ENCODE measurements at regions of chr2 and their contacts with region 1.

Region 1: DNA sequence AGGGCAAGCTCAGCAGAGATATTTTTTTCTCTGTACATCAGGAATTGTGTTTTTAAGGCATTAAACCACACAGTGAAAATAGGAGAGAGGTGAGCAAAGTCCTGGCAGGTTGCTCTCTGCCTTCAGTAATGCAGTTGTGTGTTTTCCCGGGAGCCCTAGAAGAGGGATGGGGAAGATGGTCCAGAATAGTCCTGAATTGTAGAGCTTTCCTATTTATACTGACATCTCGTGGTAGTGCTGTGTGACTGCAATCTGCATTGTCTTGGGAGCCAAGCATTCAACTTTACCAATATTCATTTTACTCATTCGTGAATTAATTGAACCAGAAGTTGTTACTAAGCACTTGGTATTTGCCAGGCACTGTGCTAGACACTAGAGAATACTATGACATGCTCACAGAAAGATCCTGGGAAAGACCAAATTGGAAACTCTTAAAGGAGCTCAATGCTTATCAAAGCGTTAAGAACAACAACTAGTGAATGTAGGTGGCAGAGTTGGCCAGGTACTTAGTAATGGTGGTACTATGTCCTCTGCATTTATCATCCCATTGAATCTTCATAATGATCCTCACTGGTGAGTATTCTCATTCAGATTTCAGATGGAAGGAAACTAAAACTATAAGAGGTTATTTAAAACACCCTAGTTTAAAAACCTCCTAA is 214.6 kb downstream of the TRIB2 start:
- DNase-seq: peak in 3 of 9 experiments; percentile 6 to 51 (median 28)
- ATAC-seq: peak; percentile 40
- H3K4me3 ChIP-seq: no peak overlapping the region
- H3K4me3 Mint-ChIP-seq: no peak overlapping the region
- H3K27ac ChIP-seq: no peak overlapping the region
- H3K27ac Mint-ChIP-seq: no peak overlapping the region
- H3K4me1 ChIP-seq: no peaks in the 10 kb centered on the region
- H3K4me1 Mint-ChIP-seq: no peaks in the 10 kb centered on the region
- H3K27me3 ChIP-seq: no peaks in the 10 kb centered on the region
- H3K27me3 Mint-ChIP-seq: peaks cover 2% of the 10 kb centered on the region
- CTCF ChIP-seq: peak; percentile 70

Region 2: GRCh38 chr2:11829947-11830707 is 1101.2 kb before region 1 on chr2:
- CTCF ChIA-PET with region 1: interaction called, 27 read pairs
- POLR2A ChIA-PET with region 1: no interaction called
- intact Hi-C with region 1: loop called (anchors 1 to 2 kb)
- DNase-seq: peak in 8 of 9 experiments; percentile 21 to 77 (median 51)
- ATAC-seq: peak; percentile 78
- H3K4me3 ChIP-seq: peak overlapping the region; percentile 27 to 40
- H3K4me3 Mint-ChIP-seq: peak overlapping the region; percentile 78
- H3K27ac ChIP-seq: no peak overlapping the region
- H3K27ac Mint-ChIP-seq: peak overlapping the region; percentile 42
- H3K4me1 ChIP-seq: peaks cover 28% of the 10 kb centered on the region
- H3K4me1 Mint-ChIP-seq: peaks cover 45% of the 10 kb centered on the region
- H3K27me3 ChIP-seq: no peaks in the 10 kb centered on the region
- H3K27me3 Mint-ChIP-seq: no peaks in the 10 kb centered on the region
- CTCF ChIP-seq: no peak

Region 3: DNA sequence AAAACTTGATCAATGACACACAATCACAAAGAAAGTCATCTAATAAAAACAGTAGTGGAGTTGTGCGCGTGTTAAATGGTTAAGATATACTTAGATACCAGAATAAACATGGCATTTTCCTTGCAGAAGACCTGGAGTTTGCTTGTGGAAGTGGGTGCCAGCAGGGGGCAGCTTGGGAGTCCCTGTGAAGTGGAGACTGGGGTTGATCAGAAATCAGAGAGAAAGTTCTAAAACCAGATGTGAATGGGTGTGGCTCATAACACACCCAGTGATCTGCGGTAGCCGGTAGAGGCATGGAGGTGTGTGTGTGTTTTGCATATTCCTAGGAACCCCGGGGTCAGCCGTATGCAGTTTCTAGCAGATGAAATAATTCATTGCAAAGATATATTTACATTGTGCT is 514.7 kb before region 1 on chr2:
- CTCF ChIA-PET with region 1: interaction called, 16 read pairs
- POLR2A ChIA-PET with region 1: no interaction called
- intact Hi-C with region 1: loop called (anchors 2 kb)
- DNase-seq: peak; percentile 34 to 78 (median 58)
- ATAC-seq: peak; percentile 62
- H3K4me3 ChIP-seq: no peak overlapping the region
- H3K4me3 Mint-ChIP-seq: no peak overlapping the region
- H3K27ac ChIP-seq: no peak overlapping the region
- H3K27ac Mint-ChIP-seq: peak overlapping the region; percentile 5
- H3K4me1 ChIP-seq: peaks cover 20% of the 10 kb centered on the region
- H3K4me1 Mint-ChIP-seq: peaks cover 34% of the 10 kb centered on the region
- H3K27me3 ChIP-seq: no peaks in the 10 kb centered on the region
- H3K27me3 Mint-ChIP-seq: no peaks in the 10 kb centered on the region
- CTCF ChIP-seq: peak; percentile 43

Region 4: DNA sequence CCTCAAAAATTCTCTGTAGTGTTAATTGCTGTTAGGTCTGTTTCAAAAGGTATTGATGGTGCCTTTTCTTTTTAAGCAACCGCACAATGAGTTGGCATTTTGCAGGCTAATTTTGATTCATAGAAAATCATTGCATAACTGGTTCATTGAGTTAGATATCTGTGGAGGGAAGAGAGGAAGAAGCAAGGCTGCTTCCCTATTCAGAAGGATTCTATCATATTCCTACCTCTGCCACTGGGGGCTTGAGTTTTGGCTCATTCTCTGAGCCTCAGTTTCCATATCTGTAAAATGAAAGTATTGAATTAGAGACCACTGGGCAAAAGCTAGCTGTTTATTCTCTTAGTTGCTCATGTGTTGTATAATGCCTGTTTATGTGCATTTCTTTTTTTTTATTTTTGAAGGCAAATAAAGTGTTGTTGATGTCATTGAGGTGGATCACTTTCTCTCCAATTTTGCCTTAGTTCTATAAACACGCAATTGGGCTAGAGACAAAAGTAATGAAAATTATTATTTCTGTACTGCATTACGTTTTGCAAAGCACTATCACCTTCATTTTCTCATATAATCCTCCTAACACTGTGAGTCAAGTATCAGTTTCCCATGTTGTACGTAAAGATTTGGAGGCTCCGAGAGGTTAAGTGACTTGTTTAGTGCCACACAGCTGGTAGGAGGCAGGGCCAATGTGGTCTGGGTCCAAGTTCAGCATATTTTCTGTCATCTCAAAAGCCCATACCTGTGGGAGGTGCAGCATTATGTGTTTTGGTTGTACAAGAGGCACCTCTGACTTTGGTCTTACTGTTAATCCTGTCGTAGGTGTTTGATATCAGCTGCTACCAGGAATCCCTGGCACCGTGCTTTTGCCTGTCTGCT is 208.6 kb before region 1 on chr2:
- CTCF ChIA-PET with region 1: interaction called, 40 read pairs
- POLR2A ChIA-PET with region 1: interaction called, 15 read pairs
- intact Hi-C with region 1: loop called in 1 of 2 experiments (anchors 5 kb)
- DNase-seq: no peak
- ATAC-seq: no peak
- H3K4me3 ChIP-seq: no peak overlapping the region
- H3K4me3 Mint-ChIP-seq: peak overlapping the region; percentile 19
- H3K27ac ChIP-seq: no peak overlapping the region
- H3K27ac Mint-ChIP-seq: no peak overlapping the region
- H3K4me1 ChIP-seq: peaks cover 50% of the 10 kb centered on the region
- H3K4me1 Mint-ChIP-seq: peaks cover 85% of the 10 kb centered on the region
- H3K27me3 ChIP-seq: no peaks in the 10 kb centered on the region
- H3K27me3 Mint-ChIP-seq: no peaks in the 10 kb centered on the region
- CTCF ChIP-seq: no peak

Region 5: DNA sequence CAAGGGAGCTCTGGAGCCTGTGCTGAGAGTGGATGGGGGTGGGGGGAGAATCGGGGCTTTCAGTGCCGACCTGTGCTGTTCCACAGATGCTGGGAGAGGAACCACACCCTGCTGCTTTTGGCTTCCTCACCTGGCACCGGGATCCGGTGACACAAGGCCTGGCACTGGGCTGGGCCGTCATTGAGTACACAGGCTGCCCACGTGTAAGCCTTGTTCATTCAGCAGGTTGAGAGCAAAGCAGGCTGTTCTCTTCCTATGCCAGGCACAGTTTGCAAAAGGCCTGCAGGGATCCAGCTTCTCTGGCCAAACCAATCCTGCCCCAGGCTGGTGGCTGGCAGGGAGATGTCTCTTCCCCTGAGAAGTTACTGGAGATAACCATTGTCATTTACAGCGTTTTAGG is 197.5 kb before region 1 on chr2:
- CTCF ChIA-PET with region 1: interaction called, 28 read pairs
- POLR2A ChIA-PET with region 1: interaction called, 5 read pairs
- intact Hi-C with region 1: no loop called
- DNase-seq: no peak
- ATAC-seq: no peak
- H3K4me3 ChIP-seq: no peak overlapping the region
- H3K4me3 Mint-ChIP-seq: no peak overlapping the region
- H3K27ac ChIP-seq: no peak overlapping the region
- H3K27ac Mint-ChIP-seq: no peak overlapping the region
- H3K4me1 ChIP-seq: peaks cover 47% of the 10 kb centered on the region
- H3K4me1 Mint-ChIP-seq: peaks cover 63% of the 10 kb centered on the region
- H3K27me3 ChIP-seq: no peaks in the 10 kb centered on the region
- H3K27me3 Mint-ChIP-seq: no peaks in the 10 kb centered on the region
- CTCF ChIP-seq: no peak

Region 6: DNA sequence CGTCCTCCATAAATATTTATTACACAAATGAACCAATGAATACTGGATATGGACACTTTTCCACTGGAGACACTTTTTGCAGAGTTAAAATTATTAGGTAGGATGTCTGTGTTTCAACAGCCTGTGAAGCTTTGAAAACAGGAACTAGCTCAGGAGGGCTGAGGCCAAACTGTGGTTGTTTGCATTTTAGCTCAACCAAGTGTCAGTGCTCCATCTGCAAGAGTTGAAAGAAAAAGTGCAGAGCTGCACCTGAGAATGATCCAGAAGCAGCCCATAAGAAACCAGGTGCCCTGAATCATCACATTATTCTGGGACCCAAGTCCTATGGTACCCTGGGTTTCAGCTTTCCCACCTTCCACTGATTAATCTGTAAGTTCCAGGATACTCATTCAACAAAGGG is 34.1 kb before region 1 on chr2:
- CTCF ChIA-PET with region 1: interaction called, 22 read pairs
- POLR2A ChIA-PET with region 1: interaction called, 9 read pairs
- intact Hi-C with region 1: no loop called
- DNase-seq: peak in 2 of 9 experiments; percentile 13 to 56
- ATAC-seq: no peak
- H3K4me3 ChIP-seq: no peak overlapping the region
- H3K4me3 Mint-ChIP-seq: peak overlapping the region; percentile 43
- H3K27ac ChIP-seq: no peak overlapping the region
- H3K27ac Mint-ChIP-seq: peak overlapping the region; percentile 58
- H3K4me1 ChIP-seq: peaks cover 13% of the 10 kb centered on the region
- H3K4me1 Mint-ChIP-seq: peaks cover 24% of the 10 kb centered on the region
- H3K27me3 ChIP-seq: no peaks in the 10 kb centered on the region
- H3K27me3 Mint-ChIP-seq: no peaks in the 10 kb centered on the region
- CTCF ChIP-seq: no peak

Region 7: GRCh38 chr2:12948961-12949353 is 17.6 kb after region 1 on chr2:
- CTCF ChIA-PET with region 1: interaction called, 23 read pairs
- POLR2A ChIA-PET with region 1: no interaction called
- intact Hi-C with region 1: no loop called
- DNase-seq: peak in 2 of 9 experiments; percentile 7 to 24
- ATAC-seq: no peak
- H3K4me3 ChIP-seq: no peak overlapping the region
- H3K4me3 Mint-ChIP-seq: no peak overlapping the region
- H3K27ac ChIP-seq: peak overlapping the region in 1 of 2 experiments; percentile 17
- H3K27ac Mint-ChIP-seq: peak overlapping the region; percentile 30
- H3K4me1 ChIP-seq: peaks cover 6% of the 10 kb centered on the region
- H3K4me1 Mint-ChIP-seq: peaks cover 17% of the 10 kb centered on the region
- H3K27me3 ChIP-seq: no peaks in the 10 kb centered on the region
- H3K27me3 Mint-ChIP-seq: peaks cover 17% of the 10 kb centered on the region
- CTCF ChIP-seq: no peak